HEK293 (cell line): ENCODE measurements at regions of chr17 and their contacts with region 1.

Region 1: DNA sequence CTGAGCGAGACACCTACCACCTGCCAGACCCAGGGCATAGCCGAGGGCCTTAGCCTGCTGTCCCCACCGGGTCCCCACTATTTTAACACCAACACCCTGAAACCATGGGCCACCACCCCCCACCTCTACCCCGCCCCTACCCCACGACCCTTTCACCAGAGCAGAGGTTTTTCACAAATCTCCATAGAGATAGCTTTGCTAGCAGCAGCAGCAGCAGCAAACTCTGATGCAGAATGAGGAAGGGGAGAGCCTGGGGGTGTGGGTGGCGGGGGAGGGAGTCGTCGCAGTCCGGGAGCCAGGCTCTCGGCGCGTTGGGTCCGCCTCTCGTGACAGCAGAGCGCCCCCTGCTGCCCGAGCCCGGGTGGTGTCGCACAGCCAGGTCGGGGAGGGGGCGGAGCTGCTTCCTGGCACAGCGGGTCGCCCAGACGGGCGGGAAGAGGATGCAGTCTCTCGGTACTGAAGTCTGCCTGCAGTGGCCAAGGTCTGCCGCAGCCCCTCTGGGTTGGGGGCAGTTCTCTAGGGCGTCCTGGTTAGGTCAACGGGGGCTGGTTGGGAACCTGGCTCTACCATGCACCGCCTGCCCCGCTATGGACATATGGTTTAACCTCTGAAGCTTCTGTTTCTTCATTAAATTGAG is 38.1 kb upstream of the CCDC182 start:
- H3K4me3 ChIP-seq: no peak overlapping the region
- H3K27ac ChIP-seq: no peak overlapping the region; the same call in 1 of the 2 replicates
- H3K4me1 ChIP-seq: peaks cover 3% of the 10 kb centered on the region; the same call in 1 of the 2 replicates
- CTCF ChIP-seq: peak; percentile 94

Region 2: GRCh38 chr17:57597531-57598453 is 185.4 kb before region 1 on chr17:
- CTCF ChIA-PET with region 1: interaction called, 15 read pairs
- POLR2A ChIA-PET with region 1: no interaction called
- H3K4me3 ChIP-seq: no peak overlapping the region
- H3K27ac ChIP-seq: no peak overlapping the region
- H3K4me1 ChIP-seq: 0 out of 2 replicates have a peak, but pooled peaks cover 5% of the 10 kb centered on the region
- CTCF ChIP-seq: peak; percentile 75

Region 3: DNA sequence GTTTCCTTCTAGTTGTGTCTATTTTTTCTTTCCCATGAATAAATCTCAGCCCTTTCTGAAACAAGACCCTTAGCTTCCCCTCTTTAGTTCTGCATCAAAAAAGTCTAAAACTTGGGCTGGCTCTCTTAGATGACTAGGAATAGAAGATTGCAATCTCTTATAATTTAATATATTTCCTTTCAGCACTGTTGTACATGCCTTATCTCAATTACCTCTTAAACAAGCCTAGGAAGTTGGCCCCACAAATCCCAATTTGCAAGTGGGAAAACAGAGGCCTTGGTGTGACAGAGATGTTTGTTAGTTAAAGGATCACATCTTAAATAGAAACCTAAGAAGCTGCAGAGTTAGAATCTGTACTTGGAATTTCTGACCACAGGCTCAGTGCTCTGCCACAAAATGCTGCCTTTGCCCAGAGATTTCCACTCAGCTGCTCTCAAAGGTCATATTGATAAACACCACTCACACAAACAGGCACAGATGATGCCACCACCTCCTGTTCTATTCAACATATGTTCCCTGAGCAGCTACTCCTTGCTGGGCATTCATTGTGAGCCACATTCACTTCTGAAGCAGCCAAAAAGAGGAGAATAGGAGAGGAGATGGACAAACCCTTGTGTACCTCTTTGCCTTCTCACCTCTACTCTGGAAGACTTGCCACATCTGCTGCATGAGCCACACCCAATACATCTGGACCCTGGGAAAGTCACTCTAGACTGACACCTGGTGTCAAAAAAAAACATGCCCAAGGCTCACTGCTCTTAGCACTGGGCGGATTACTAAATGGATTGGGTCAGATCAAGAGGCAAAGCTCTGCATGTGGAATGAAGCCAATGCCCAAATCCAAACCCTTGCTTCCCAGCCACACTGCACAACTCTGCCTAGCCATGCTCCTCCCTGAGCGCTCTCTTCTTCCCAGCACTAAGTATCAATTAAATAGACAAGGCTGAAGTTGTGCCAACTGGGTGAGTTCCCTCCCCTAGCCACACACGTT is 43.5 kb before region 1 on chr17:
- CTCF ChIA-PET with region 1: interaction called, 20 read pairs
- POLR2A ChIA-PET with region 1: no interaction called
- H3K4me3 ChIP-seq: no peak overlapping the region
- H3K27ac ChIP-seq: no peak overlapping the region
- H3K4me1 ChIP-seq: no peaks in the 10 kb centered on the region
- CTCF ChIP-seq: 0 out of 2 replicates have a peak, but pooled peaks have one; percentile 31

Region 4: GRCh38 chr17:57772774-57773173 is 10.4 kb before region 1 on chr17:
- CTCF ChIA-PET with region 1: interaction called, 162 read pairs
- POLR2A ChIA-PET with region 1: no interaction called
- H3K4me3 ChIP-seq: no peak overlapping the region
- H3K27ac ChIP-seq: no peak overlapping the region
- H3K4me1 ChIP-seq: no peaks in the 10 kb centered on the region
- CTCF ChIP-seq: no peak

Region 5: DNA sequence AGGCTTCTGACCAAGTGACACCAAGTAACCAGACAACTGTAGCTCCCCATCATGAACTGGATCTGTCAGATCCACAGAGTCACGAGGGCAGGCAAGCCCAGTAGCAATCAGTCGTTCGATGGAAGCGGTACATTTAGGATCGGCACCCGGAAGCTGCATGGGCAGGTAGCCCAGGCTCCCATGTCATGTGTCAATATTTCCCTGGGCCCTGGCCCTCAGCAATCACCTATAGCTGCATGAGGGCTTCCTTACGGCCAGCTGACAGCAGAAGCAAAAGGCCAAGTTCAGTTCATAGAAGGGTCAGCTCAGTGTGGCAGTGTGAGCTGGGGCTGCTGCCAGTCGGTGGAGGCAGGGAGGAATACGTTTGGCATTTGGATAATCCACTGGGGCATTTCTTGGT is 34.8 kb after region 1 on chr17:
- CTCF ChIA-PET with region 1: interaction called, 15 read pairs
- POLR2A ChIA-PET with region 1: no interaction called
- H3K4me3 ChIP-seq: no peak overlapping the region
- H3K27ac ChIP-seq: no peak overlapping the region
- H3K4me1 ChIP-seq: no peaks in the 10 kb centered on the region
- CTCF ChIP-seq: no peak